ENCODE measurements at regions of chr2 and their contacts with region 1.

Region 1: DNA sequence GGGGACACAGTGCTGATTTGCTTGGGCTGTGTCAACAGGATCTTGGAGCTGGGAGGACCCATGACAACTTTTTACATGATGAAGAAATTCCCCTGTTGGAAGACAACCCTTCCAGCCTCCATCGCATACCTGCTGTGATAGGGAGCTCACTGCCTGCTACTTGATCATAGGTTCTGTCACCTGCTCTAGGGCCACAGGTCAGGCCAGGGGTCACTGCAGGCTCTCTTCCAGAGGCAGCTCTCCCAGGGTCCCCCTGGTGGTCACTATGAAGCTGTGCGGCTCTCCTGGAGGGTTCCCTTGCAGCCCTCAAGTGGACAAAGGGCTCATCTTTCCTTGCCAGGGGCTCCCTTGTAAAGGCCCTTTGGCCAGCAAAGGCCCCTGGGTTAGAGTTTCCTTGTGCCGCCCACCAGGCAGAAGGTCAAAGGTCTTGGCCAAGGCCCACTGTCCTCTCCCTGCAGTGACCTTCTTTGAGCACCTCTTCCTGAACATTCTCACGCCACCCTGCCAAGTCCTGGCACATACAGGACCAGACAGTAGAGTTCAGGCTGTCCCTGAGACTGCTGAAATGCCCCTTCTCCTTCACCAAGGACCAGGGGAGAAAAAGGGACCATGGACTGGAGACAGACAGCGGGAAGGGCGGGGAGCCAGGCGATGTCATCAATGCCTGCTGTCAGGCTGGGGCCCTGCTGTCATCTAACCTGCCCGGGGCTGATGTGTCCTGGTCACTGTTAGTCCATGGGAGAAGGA is 345.1 kb downstream of the DYSF start:
- DNase-seq: peak; percentile 42
- H3K4me3 Mint-ChIP-seq: no peak overlapping the region
- H3K27ac Mint-ChIP-seq: no peak overlapping the region
- H3K4me1 Mint-ChIP-seq: no peaks in the 10 kb centered on the region
- H3K27me3 Mint-ChIP-seq: peaks cover 54% of the 10 kb centered on the region
- CTCF ChIP-seq: peak; percentile 86

Region 2: GRCh38 chr2:71545572-71546274 is 252.7 kb before region 1 on chr2:
- CTCF ChIA-PET with region 1: no interaction called
- intact Hi-C with region 1: loop called (anchors 5 kb)
- DNase-seq: peak; percentile 59
- H3K4me3 Mint-ChIP-seq: peak overlapping the region; percentile 54
- H3K27ac Mint-ChIP-seq: no peak overlapping the region
- H3K4me1 Mint-ChIP-seq: peaks cover 17% of the 10 kb centered on the region
- H3K27me3 Mint-ChIP-seq: peaks cover 64% of the 10 kb centered on the region
- CTCF ChIP-seq: peak; percentile 74

Region 3: GRCh38 chr2:71609958-71610357 is 188.5 kb before region 1 on chr2:
- CTCF ChIA-PET with region 1: interaction called, 10 read pairs
- intact Hi-C with region 1: loop called (anchors 1 kb)
- DNase-seq: no peak
- H3K4me3 Mint-ChIP-seq: no peak overlapping the region
- H3K27ac Mint-ChIP-seq: no peak overlapping the region
- H3K4me1 Mint-ChIP-seq: no peaks in the 10 kb centered on the region
- H3K27me3 Mint-ChIP-seq: peaks cover 64% of the 10 kb centered on the region
- CTCF ChIP-seq: peak; percentile 39